ENCODE measurements at regions of chr3 and their contacts with region 1.

Region 1: DNA sequence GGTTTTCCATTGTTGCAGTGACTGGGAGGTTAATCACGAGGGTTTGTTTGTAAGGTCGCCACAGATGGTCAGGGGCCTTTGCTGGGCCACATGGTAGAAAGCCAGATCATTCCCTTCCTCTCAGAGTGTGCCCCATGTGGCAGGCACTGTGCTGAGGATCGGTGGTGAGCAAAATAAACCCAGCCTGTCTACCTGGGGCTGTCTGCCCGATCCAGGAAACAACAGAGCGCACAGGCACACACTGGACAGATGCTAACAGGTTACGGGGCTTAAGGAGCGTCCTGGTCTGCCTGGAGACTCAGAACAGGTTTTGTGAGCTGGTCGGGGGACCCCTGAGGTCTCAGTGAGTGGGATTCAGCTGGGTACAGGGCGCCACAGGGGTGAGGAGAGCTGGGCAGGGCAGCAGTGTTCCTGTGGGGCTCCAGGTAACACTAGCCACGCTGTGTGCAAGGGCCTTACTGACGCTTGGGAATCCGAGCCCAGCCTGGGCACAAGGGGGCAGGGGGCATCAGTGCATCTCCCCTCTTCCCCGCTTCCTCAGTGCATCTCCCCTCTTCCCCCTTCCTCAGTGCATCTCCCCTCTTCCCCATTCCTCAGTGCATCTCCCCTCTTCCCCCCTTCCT is 136.4 kb downstream of the DNAJB8 start:
- DNase-seq: no peak
- ATAC-seq: no peak
- H3K4me3 ChIP-seq: no peak overlapping the region
- H3K27ac ChIP-seq: no peak overlapping the region
- H3K4me1 ChIP-seq: peaks cover 4% of the 10 kb centered on the region
- H3K27me3 ChIP-seq: no peaks in the 10 kb centered on the region
- CTCF ChIP-seq: no peak

Region 2: DNA sequence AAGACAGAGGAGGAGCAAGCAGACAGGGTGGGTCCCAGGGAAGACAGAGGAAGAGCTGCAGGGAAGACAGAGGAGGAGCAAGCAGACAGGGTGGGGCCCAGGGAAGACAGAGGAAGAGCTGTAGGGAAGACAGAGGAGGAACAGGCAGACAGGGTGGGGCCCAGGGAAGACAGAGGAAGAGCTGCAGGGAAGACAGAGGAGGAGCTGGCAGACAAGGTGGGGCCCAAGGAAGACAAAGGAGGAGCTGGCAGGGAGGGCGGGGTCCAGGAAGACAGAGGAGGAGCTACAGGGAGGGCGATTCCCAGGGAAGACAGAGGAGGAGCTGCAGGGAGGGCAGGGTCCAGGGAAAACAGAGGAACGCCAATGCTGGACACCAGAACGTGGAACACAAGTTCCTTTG is 1280.9 kb before region 1 on chr3:
- CTCF ChIA-PET with region 1: no interaction called
- POLR2A ChIA-PET with region 1: interaction called, 11 read pairs
- intact Hi-C with region 1: no loop called
- DNase-seq: peak; percentile 50
- ATAC-seq: peak; percentile 58
- H3K4me3 ChIP-seq: no peak overlapping the region
- H3K27ac ChIP-seq: no peak overlapping the region
- H3K4me1 ChIP-seq: no peaks in the 10 kb centered on the region
- H3K27me3 ChIP-seq: no peaks in the 10 kb centered on the region
- CTCF ChIP-seq: no peak